Left cardiac atrium (tissue), 4 donors: ENCODE measurements at regions of chr5 and their contacts with region 1.

Region 1: DNA sequence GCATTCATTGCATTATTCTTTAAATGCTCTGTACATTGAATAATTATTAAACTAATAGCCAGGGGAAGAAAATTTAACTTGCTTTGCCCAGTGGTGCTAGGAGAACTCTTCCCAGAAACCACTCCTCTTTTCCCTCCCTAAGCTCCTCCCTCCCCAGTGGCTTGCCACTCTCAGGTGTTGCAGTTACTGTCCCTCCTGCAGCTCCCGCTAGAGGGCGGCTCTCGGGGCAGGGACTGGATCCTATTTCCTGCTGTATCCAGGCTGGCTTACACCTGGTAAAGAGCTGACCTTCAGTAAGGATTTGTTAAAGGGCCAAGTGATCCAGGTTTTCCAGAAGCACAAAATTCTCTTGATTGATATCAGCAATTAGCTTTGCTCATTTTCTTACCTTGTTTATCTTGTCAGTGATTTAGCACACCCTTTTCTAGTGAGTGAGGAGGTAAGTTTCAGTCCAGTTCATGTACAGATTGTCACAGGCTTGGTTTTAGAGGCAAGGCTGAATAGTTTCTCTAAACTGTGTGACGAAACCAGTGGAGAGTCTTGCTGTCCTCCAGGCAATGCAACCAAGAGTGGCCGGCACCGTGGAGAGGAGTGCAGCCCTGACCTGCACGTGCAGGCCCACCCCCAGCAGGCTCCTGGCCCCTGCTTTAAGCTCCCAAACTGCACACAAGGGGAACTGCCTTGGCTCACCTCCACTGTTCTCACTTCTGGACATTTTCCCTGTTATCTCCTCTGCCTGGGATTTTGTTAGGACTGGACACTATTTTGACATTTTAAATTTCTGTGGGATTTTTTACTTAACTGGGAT is 423.8 kb downstream of the SPOCK1 start:
- DNase-seq: peak; percentile 56
- ATAC-seq: peak in 1 of 2 donors; percentile 27

Region 2: GRCh38 chr5:137032929-137033328 is 42.4 kb before region 1 on chr5:
- intact Hi-C with region 1: no loop called
- DNase-seq: no peak
- ATAC-seq: no peak

Region 3: DNA sequence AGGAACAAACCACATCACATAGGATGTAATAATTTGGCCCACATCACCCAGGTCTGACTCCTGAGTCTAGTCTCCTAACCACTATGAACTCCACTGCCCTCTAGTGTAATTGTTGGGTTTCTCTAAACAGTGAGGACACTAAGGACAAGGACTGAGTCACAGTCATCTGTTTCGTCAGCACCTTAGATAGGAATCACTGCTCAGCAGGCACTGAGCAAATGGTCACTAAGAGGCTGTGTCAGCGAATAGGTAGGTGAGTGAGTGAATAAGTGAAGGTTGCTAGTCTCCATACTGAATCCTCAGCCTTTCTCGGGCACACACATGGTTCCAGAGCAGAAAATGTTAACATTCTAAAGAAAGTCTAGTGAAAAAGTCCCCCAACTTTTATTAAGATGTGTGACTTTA is 145.2 kb after region 1 on chr5:
- intact Hi-C with region 1: loop called in 1 of 2 experiments (anchors 10 kb)
- DNase-seq: no peak
- ATAC-seq: peak in 1 of 2 donors; percentile 79

Region 4: DNA sequence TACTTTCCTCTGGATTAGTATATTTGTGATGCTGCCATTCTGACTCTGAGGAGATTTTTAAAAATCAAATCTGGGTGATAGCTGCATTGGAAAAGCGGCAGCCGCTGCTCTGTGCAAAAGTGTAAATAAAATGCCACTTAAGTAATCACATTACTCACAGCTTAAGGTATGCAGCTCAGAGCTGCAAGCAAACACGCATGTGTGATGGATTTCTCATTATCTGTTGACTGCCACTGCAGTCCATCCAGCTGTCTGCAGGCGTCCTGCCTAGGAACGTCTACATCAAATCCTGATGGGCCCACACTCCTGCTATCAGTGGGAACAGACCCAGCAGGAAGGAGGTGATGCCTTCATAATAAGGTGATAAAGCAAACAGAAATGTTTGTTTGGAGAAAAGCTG is 206.8 kb after region 1 on chr5:
- intact Hi-C with region 1: loop called in 1 of 2 experiments (anchors 5 kb)
- DNase-seq: peak; percentile 45
- ATAC-seq: peak; percentile 88 to 92

Region 5: DNA sequence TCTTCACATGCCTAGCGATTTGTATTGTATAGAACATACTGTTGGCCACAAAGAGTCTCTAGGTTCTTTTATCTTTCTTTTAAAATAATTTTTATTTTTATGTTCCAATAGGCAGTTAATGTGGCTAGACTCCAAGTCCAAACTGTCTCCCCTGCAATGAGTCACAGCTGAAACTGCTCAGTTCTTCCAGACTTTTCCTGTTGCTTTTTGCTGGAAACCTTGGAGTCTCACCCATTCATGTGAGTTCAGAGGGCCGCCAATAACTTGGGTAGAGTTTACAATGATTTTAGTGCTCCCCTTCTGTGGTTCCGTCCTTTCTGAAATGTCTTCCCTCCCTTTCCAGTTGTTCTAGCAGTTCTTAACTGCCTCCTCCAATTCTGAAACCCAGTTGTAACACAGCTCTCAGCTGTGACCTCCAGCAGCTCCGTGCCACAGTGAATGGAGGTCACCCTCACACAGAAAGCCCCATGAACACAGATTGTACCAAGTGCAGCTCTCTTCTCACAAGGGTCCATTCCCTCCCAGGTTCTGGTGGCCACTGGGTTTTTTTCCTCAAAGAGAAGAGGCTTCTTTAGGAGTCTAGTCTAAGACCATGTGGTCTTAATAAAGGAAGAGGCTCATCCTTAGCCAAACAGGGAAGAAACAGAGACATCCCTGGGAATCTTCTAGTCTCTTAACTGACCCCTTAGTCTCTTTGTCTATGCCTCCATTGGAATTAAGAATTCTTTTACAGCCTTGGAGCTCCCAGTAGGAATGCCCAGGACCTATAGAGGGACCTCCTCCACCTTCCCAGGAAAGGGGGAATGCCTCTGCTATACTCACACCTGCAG is 225.3 kb after region 1 on chr5:
- intact Hi-C with region 1: loop called in 1 of 2 experiments (anchors 5 kb)
- DNase-seq: no peak
- ATAC-seq: peak; percentile 48 to 79